ENCODE measurements at regions of chr15 and their contacts with region 1.

Region 1: GRCh38 chr15:46518381-46518780 is 883.6 kb downstream of the SQOR start:
- DNase-seq: no peak
- ATAC-seq: no peak
- H3K4me3 ChIP-seq: no peak overlapping the region
- H3K27ac ChIP-seq: no peak overlapping the region
- H3K4me1 ChIP-seq: no peaks in the 10 kb centered on the region
- H3K27me3 ChIP-seq: no peaks in the 10 kb centered on the region
- CTCF ChIP-seq: no peak

Region 2: GRCh38 chr15:46576646-46577395 is 58.4 kb after region 1 on chr15:
- intact Hi-C with region 1: loop called in 1 of 3 experiments (anchors 10 kb)
- DNase-seq: no peak
- ATAC-seq: no peak
- H3K4me3 ChIP-seq: no peak overlapping the region
- H3K27ac ChIP-seq: no peak overlapping the region
- H3K4me1 ChIP-seq: no peaks in the 10 kb centered on the region
- H3K27me3 ChIP-seq: no peaks in the 10 kb centered on the region
- CTCF ChIP-seq: no peak

Measured in pancreas (tissue), 10 donors.